Common myeloid progenitor, CD34-positive (primary cell): ENCODE measurements at regions of chr20 and their contacts with region 1.

Region 1: GRCh38 chr20:43448748-43449535 is 8.8 kb upstream of the SRSF6 start:
- DNase-seq: peak; percentile 55 to 75 (median 66)
- H3K4me3 ChIP-seq: no peak overlapping the region
- H3K27ac ChIP-seq: no peak overlapping the region
- H3K4me1 ChIP-seq: peaks cover 3 to 34% (median 27%) of the 10 kb centered on the region in 4 experiments
- H3K27me3 ChIP-seq: peaks cover 0 to 1% (median 0%) of the 10 kb centered on the region in 5 experiments

Region 2: GRCh38 chr20:43320536-43320935 is 128.4 kb before region 1 on chr20:
- CTCF ChIA-PET with region 1: no interaction called
- POLR2A ChIA-PET with region 1: no interaction called
- DNase-seq: no peak
- H3K4me3 ChIP-seq: no peak overlapping the region
- H3K27ac ChIP-seq: no peak overlapping the region
- H3K4me1 ChIP-seq: no peaks in the 10 kb centered on the region
- H3K27me3 ChIP-seq: peaks cover 0 to 8% (median 0%) of the 10 kb centered on the region in 5 experiments

Region 3: DNA sequence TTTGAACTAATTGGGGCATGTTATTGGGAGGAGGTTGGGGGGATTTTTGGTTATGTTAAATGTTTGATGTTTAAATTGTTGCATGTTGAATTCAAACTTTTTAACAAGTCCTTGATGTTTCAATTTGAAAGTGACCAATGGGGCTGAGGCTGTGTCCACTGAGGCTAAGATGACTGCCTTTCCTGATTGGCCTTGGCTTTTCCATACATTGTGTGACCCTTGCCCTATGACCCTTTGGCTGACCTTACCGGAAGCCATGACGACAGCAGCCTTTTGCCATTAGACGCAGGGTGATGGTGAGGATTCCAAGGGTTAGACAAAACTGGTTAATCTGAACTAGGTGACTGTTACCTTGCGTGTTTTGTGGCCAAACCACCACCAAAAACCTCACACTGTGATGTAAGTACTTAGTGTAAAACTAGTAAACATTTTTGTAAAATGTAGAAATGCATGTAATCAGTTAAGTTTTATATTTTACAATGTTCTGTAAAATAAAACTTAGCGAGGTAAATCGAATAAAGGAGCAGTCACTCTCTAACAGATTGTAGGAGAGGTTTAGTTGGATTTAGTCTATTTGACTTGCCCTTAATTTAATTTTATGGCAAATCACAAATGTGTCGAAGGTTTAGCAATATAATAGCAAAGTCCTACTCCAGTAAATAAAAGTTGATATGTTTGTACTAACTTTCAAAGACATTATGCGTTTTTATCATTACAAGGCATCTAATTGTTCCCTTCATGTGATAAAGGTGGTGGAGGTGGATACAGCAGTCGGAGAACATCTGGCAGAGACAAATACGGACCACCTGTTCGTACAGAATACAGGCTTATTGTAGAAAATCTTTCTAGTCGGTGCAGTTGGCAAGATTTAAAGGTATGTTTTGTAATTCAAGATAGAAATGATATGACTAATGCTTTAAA is 10.3 kb after region 1 on chr20:
- CTCF ChIA-PET with region 1: no interaction called
- POLR2A ChIA-PET with region 1: no interaction called
- DNase-seq: no peak
- H3K4me3 ChIP-seq: peak overlapping the region in 6 of 7 experiments; percentile 74 to 92 (median 86)
- H3K27ac ChIP-seq: peak overlapping the region in 1 of 2 experiments; percentile 99
- H3K4me1 ChIP-seq: peaks cover 8 to 21% (median 16%) of the 10 kb centered on the region in 4 experiments
- H3K27me3 ChIP-seq: no peaks in the 10 kb centered on the region

Region 4: GRCh38 chr20:43492101-43492500 is 43.2 kb after region 1 on chr20:
- CTCF ChIA-PET with region 1: no interaction called
- POLR2A ChIA-PET with region 1: no interaction called
- DNase-seq: no peak
- H3K4me3 ChIP-seq: no peak overlapping the region
- H3K27ac ChIP-seq: no peak overlapping the region
- H3K4me1 ChIP-seq: no peaks in the 10 kb centered on the region
- H3K27me3 ChIP-seq: peaks cover 0 to 6% (median 0%) of the 10 kb centered on the region in 5 experiments

Region 5: DNA sequence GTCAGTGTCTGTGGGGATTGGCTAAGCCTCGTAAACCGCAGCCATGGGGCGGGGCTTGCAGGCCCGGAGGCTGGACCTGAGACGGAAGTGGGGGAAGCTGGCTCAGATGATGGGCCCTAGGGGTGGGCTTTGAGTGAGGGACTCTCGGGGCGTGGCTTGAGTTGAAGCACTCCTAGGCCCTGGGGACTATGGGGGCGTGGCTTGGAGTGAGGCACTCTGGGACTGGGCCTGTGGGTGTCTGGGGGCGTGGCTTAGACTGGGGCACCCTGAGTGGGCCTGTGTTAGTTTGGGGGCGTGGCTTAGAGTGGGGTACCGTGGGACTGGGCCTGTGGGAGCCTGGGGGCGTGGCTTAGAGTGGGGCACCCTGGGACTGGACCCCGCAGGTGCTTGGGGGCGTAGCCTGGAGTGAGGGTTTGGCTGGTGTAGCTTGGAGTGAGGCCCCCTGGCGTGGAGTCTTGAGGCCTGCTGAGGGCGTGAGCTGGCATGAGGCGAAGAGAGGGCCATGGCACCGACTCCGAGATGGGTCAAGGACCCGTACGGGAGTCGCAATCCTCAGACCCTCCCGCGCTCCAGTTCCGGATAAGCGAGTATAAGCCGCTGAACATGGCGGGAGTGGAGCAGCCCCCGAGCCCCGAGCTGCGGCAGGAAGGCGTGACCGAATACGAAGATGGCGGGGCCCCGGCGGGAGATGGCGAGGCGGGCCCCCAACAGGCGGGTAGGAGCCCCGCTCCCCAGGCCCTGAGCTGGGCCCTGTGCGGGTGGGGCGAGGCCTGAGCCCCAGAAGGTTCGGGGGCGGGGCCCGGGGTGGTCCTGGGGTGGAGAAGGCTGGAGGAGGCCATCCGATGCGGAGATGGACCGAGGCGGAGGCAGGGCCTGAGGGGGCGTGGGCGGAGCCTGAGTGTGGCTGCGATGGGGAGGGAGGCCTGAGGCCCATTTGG is 65.4 kb after region 1 on chr20:
- CTCF ChIA-PET with region 1: interaction called, 10 read pairs
- POLR2A ChIA-PET with region 1: no interaction called
- DNase-seq: peak; percentile 98 to 99 (median 99)
- H3K4me3 ChIP-seq: peak overlapping the region; percentile 37 to 78 (median 60)
- H3K27ac ChIP-seq: peak overlapping the region in 1 of 2 experiments; percentile 34
- H3K4me1 ChIP-seq: peaks cover 0 to 15% (median 11%) of the 10 kb centered on the region in 4 experiments
- H3K27me3 ChIP-seq: peaks cover 0 to 2% (median 1%) of the 10 kb centered on the region in 5 experiments

Region 6: DNA sequence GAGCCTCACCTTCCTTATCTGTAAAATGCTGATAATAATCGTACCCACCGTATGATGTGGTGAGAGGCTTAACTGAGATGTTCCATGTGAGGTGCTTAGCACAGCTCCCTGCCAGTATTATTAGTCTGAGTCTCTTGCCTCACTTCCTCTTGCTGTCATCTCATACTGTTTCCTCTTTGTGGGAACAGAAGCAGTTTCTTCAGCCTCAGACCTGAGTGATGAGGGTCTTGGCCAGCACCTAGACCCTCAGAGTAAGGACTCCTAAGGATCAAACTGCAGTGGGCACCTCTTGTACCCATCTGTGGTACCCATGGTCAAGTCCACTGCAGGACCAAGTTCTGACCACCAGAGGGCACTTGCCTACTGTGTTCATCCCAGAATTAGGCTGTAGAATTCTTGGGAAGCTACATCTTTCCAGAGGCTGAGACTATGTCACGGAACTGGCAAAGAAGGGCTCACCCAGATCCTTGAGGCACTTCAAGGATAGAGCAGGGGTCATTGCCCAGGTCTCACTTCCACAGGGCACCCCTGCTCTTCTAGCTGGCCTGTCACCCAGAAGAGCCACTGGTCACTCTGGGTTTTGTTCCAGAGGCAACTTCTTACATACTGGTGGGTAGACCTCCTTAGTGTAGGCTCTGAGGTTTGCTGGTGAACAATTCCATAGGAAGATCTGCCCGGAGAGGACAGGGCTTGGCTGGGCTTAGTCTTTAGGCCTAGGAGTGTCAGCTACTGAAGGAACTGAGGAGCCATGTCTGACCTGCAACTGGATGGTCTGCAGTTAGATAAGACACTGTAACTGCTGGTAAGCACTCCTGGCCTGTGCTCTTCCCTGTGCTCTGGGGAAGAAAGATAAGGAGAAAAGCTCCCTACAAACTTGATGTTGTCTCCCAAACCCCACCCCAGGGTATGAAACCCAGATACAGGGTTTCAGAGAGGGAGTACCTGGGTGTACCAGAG is 89.3 kb after region 1 on chr20:
- CTCF ChIA-PET with region 1: interaction called, 10 read pairs
- POLR2A ChIA-PET with region 1: no interaction called
- DNase-seq: peak; percentile 18 to 33 (median 20)
- H3K4me3 ChIP-seq: no peak overlapping the region
- H3K27ac ChIP-seq: no peak overlapping the region
- H3K4me1 ChIP-seq: no peaks in the 10 kb centered on the region
- H3K27me3 ChIP-seq: no peaks in the 10 kb centered on the region

Region 7: GRCh38 chr20:43691928-43692524 is 243.1 kb after region 1 on chr20:
- CTCF ChIA-PET with region 1: interaction called, 11 read pairs
- POLR2A ChIA-PET with region 1: no interaction called
- DNase-seq: peak; percentile 42 to 54 (median 50)
- H3K4me3 ChIP-seq: no peak overlapping the region
- H3K27ac ChIP-seq: no peak overlapping the region
- H3K4me1 ChIP-seq: no peaks in the 10 kb centered on the region
- H3K27me3 ChIP-seq: no peaks in the 10 kb centered on the region